ENCODE measurements at regions of chr7 and their contacts with region 1.

Region 1: DNA sequence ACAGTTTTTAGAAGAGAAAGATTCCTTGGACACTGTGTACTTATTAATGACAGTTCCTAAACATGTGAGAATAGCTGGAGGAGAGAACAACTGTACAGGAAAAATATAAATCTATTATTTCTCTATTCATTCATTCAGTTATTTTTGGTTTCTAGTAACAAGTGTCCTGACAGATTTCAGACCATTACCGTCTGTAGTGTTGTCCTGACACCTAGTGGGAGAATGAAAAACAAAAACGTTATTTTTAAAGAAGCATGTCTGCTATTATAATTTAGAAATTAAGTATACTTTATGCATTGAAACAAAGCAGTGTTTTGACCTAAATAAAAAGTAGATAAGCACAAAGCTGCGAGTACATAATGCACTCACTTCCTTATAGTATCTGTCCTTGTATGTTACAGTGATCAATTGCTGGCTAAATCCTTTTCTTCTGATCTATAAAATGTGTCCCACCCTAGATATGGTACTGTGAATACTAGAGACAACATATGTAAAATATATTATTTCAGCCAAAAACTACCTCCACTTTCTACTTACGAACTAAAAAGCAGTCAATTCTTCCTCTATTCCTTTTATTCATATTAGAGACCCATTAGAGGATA is 575.6 kb downstream of the ARL4A start:
- DNase-seq: peak; percentile 74
- ATAC-seq: peak; percentile 70
- H3K4me3 ChIP-seq: no peak overlapping the region
- H3K27ac ChIP-seq: no peak overlapping the region
- H3K4me1 ChIP-seq: no peaks in the 10 kb centered on the region
- H3K27me3 ChIP-seq: no peaks in the 10 kb centered on the region
- CTCF ChIP-seq: peak; percentile 74

Region 2: DNA sequence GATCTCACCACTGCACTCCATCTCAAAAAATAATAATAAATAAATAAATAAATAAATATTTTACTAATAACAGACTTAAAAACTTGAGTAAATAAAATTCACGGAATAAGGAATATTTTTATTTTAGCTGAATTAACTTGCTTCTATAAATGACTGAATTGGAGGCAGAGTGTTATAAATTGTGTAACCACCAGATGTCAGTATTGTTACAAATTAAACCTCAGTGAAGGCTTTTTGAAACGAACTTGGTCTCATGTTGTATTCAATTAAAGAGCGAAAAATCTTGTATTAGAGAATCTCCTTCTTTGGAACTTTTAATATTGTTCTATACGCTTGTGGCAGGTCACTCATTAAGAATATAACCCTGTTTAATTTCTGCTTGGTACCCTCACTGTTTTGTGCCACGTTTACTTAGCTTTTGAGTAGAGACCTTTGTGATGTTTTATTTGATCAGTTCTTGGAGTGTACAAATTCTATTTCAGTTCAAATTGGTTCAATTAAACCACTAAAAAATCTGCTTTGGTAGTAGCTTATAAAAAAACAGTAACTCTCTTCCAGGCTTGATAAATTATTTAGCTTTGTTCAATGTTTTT is 738.1 kb before region 1 on chr7:
- CTCF ChIA-PET with region 1: interaction called, 3 read pairs
- POLR2A ChIA-PET with region 1: no interaction called
- intact Hi-C with region 1: loop called (anchors 5 kb)
- DNase-seq: peak; percentile 80
- ATAC-seq: peak; percentile 51; the same call in 1 of the 2 replicates
- H3K4me3 ChIP-seq: no peak overlapping the region
- H3K27ac ChIP-seq: no peak overlapping the region
- H3K4me1 ChIP-seq: no peaks in the 10 kb centered on the region
- H3K27me3 ChIP-seq: no peaks in the 10 kb centered on the region
- CTCF ChIP-seq: peak; percentile 64

Region 3: DNA sequence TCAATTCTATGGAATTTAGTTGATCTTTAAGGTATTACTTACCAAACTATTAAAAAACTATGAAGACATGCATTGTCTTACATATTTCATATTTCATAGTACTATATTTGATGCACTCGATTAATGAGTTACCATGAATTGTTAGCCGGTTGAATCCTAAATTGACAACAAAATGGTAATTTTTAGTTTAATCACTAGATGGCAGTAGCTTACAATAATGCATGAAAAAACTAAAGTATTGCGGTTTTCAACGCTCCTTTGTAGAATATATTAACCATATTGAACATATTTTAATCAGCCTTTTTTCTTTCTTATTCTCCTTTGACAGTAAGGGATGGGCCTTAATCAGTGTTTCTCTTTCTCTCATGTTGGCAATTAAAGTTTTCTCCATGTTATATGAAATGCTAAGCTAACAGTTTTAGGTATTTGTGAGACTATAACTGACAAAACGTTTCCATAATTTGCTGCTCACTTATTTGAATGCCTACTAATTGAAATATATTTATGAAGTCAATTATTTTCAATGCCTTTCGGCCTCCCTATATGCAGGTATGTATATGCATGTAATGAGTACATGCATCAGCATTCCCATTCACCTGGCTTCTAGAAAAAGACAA is 624.1 kb before region 1 on chr7:
- CTCF ChIA-PET with region 1: interaction called, 6 read pairs
- POLR2A ChIA-PET with region 1: no interaction called
- intact Hi-C with region 1: loop called (anchors 1 kb)
- DNase-seq: peak; percentile 86
- ATAC-seq: peak; percentile 64
- H3K4me3 ChIP-seq: no peak overlapping the region
- H3K27ac ChIP-seq: no peak overlapping the region
- H3K4me1 ChIP-seq: peaks cover 4% of the 10 kb centered on the region; the same call in 1 of the 2 replicates
- H3K27me3 ChIP-seq: no peaks in the 10 kb centered on the region
- CTCF ChIP-seq: peak; percentile 74

Region 4: DNA sequence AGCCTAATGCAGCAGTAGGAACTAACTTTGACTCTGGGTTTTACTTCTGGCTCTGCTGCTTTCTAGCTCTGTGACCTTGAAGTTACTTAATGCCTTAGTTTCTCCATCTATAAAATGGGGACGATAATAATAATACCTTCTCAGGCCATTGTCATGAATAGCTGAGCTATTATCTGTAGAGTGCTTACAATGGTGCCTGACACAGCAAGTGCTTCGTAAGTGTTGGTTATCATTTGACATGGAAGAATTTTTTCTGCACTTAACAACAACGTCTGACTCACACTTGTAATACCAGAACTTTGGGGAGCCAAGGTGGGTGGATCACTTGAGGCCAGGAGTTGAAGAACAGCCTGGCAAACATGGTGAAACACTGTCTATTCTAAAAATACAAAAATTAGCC is 435.1 kb before region 1 on chr7:
- CTCF ChIA-PET with region 1: no interaction called
- POLR2A ChIA-PET with region 1: no interaction called
- intact Hi-C with region 1: loop called (anchors 10 kb)
- DNase-seq: peak; percentile 36
- ATAC-seq: no peak
- H3K4me3 ChIP-seq: no peak overlapping the region
- H3K27ac ChIP-seq: peak overlapping the region; percentile 58
- H3K4me1 ChIP-seq: peaks cover 16% of the 10 kb centered on the region
- H3K27me3 ChIP-seq: no peaks in the 10 kb centered on the region
- CTCF ChIP-seq: no peak

Region 5: GRCh38 chr7:12951397-12951801 is 311.6 kb before region 1 on chr7:
- CTCF ChIA-PET with region 1: no interaction called
- POLR2A ChIA-PET with region 1: no interaction called
- intact Hi-C with region 1: loop called (anchors 5 kb)
- DNase-seq: peak; percentile 82
- ATAC-seq: peak; percentile 99
- H3K4me3 ChIP-seq: peak overlapping the region; percentile 27; the same call in 1 of the 2 replicates
- H3K27ac ChIP-seq: peak overlapping the region; percentile 69
- H3K4me1 ChIP-seq: peaks cover 20% of the 10 kb centered on the region
- H3K27me3 ChIP-seq: no peaks in the 10 kb centered on the region
- CTCF ChIP-seq: no peak

Region 6: GRCh38 chr7:13042612-13043240 is 220.3 kb before region 1 on chr7:
- CTCF ChIA-PET with region 1: no interaction called
- POLR2A ChIA-PET with region 1: no interaction called
- intact Hi-C with region 1: loop called (anchors 1 kb)
- DNase-seq: peak; percentile 87
- ATAC-seq: peak; percentile 99
- H3K4me3 ChIP-seq: no peak overlapping the region
- H3K27ac ChIP-seq: peak overlapping the region; percentile 68
- H3K4me1 ChIP-seq: peaks cover 26% of the 10 kb centered on the region
- H3K27me3 ChIP-seq: no peaks in the 10 kb centered on the region
- CTCF ChIP-seq: no peak

Region 7: GRCh38 chr7:13067036-13067435 is 196.0 kb before region 1 on chr7:
- CTCF ChIA-PET with region 1: no interaction called
- POLR2A ChIA-PET with region 1: no interaction called
- intact Hi-C with region 1: no loop called
- DNase-seq: no peak
- ATAC-seq: no peak
- H3K4me3 ChIP-seq: no peak overlapping the region
- H3K27ac ChIP-seq: no peak overlapping the region
- H3K4me1 ChIP-seq: no peaks in the 10 kb centered on the region
- H3K27me3 ChIP-seq: no peaks in the 10 kb centered on the region
- CTCF ChIP-seq: no peak

Region 8: DNA sequence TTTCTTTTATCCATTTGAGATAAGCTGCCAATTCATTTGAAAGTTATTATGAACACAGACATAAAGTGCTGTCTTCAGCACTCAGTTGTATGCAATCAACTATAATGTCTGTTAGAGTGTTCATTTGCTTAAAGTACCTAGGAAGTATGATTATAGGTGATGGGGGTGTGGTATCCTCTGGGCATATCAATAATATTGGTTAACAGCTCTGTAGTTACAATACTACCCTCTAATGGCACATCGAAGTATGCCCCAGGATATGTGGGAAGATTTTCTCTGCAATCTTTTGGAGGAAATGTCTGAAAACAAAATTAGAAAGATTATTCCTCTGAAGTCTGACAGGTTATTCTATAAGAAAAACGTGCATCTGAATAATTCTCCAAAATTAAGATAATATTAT is 145.9 kb before region 1 on chr7:
- CTCF ChIA-PET with region 1: no interaction called
- POLR2A ChIA-PET with region 1: no interaction called
- intact Hi-C with region 1: loop called (anchors 2 kb)
- DNase-seq: peak; percentile 57
- ATAC-seq: peak; percentile 35; the same call in 1 of the 2 replicates
- H3K4me3 ChIP-seq: no peak overlapping the region
- H3K27ac ChIP-seq: no peak overlapping the region
- H3K4me1 ChIP-seq: peaks cover 3% of the 10 kb centered on the region; the same call in 1 of the 2 replicates
- H3K27me3 ChIP-seq: no peaks in the 10 kb centered on the region
- CTCF ChIP-seq: peak; percentile 85

Region 9: DNA sequence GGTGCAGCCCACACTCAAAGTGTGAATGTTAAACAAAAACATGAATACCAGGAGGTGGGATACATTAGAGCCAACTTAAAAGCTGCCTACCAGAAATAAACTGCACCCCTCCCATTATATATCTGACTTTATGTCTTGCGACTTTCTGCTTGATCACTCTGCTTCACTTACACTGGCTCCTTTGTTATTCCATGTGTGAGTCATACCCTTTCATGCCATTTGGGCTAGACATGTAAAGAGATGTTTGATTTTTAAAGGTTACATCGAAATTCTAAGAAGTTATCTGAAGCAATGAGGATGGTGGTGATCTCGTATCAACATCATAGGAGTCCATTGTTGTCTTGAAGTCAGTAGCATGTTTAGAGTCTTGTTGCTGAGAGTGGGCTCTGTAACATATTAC is 758.0 kb after region 1 on chr7:
- CTCF ChIA-PET with region 1: no interaction called
- POLR2A ChIA-PET with region 1: no interaction called
- intact Hi-C with region 1: no loop called
- DNase-seq: peak; percentile 69
- ATAC-seq: peak; percentile 99
- H3K4me3 ChIP-seq: no peak overlapping the region
- H3K27ac ChIP-seq: peak overlapping the region; percentile 60
- H3K4me1 ChIP-seq: peaks cover 13% of the 10 kb centered on the region
- H3K27me3 ChIP-seq: no peaks in the 10 kb centered on the region
- CTCF ChIP-seq: no peak

Measured in PC-3 (cell line).